Posterior vena cava (tissue), 2 donors: ENCODE measurements at regions of chr2 and their contacts with region 1.

Region 1: DNA sequence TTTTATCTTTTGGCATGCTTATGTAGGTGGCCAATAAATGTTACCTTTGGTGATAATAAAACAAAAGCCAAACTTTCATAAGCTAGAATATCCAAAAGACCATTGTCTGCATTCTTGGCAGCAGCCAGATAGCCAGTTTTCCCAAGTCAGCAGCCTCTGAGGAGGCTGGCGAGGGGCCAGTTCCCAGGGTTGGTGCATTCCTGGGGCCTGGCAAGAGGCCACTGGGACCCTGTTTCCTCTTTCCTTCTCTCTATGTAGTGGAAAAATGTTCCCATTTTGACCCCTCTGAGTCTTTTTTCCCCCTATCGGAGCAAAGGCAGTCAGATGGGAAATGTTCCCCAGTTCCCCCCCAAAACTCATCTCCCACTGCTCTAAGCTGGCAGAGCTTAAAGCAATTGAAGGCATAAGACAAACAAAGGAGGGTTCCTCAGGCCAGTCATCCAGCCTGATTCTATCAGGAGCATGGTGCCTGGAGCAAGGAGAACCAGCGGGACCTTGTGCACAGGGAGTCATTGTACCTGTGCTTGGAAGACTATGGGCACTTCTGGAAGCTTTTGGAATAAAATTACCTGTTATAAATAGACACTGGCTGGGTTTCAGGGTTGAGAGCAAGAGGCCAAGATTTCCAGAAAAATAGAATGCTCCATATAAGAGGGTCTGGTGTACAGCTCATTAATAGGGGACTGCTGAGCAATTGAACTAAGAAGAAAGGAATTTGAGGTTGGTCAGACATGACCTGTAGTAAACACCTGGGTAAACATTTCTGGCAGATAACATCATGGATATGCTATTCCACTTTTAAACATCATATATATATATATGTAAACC is 63.5 kb downstream of the NCKAP5 start:
- DNase-seq: no peak

Region 2: GRCh38 chr2:133581010-133581760 is 76.4 kb after region 1 on chr2:
- intact Hi-C with region 1: no loop called
- DNase-seq: no peak

Region 3: DNA sequence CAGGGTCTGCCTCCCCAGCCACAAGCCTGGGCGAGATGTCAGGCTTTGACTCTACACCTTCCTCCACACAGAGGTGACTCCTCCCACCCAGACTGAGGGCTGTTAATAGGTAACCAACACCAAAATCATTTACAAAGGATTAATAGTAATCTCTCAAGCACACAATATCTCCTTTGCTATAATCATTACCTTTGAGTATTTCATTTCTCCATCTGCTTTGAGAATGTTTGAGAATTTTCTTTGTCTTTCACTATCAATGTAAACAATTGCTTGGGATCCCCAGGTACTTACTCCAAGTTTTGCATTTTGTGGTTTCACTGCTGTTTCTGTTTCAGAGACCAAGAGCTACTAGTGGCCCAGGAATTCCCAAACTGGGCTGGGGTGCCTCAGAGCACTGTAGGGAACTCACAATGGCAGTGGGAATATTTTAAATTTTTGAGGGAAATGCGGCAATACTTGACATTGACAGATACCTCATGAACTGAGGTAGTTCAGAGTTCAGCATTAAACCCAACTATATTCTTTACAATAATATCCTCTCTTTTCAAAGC is 582.7 kb after region 1 on chr2:
- intact Hi-C with region 1: loop called in 1 of 2 experiments (anchors 10 kb)
- DNase-seq: no peak